A549 (cell line): ENCODE measurements at regions of chr11 and their contacts with region 1.

Region 1: DNA sequence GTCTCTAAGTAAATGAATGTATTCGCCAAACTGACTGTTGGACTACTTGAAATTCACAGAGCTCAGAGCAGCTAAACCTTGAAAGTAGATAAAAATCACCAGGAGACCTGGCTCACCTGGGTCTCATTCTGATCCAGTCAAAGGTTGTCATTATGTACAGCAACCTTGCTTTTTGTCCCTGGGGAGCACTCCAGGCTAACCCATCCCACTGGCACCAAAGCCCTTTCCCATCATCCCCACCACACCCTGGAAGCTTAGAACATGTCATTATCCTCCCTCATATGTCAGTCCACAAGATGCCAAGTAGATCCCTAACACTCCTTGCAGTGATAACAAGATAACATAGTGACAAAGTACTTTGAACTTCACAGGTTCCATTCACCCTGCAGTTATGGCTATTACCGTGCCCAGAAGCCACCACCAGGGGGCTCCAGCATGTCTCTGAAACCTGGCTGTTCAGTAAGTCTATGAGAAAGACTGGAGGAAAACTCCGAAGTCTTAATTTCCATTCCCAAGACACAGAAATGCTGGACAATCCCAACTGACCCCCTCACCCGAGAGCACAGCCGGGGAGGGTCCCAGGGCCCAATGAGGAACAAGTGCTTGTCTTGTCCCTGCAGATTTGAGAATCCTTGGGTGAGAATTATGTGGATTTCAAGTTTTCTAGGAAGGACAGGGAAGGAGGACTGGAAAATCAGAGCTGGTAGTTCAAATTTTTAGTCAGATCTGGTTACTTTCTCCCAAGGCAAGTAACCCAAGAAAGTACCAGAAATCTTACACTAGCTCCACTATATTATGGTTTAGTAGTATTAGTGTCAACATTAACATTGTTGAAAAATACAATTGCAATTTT is 43.0 kb upstream of the USP47 start:
- DNase-seq: peak; percentile 77 to 78
- ATAC-seq: peak; percentile 96 to 99
- H3K4me3 ChIP-seq: no peak overlapping the region
- H3K27ac ChIP-seq: peak overlapping the region; percentile 47 to 73; a peak in 4 of 6 replicates
- H3K4me1 ChIP-seq: peaks cover 4% of the 10 kb centered on the region; the same call in 2 of the 3 replicates
- CTCF ChIP-seq: peak; percentile 95
- EP300 ChIP-seq: no peak
- POLR2A ChIP-seq: no peak
- RAD21 ChIP-seq: peak; percentile 92

Region 2: GRCh38 chr11:11757909-11758308 is 40.9 kb before region 1 on chr11:
- CTCF ChIA-PET with region 1: no interaction called
- POLR2A ChIA-PET with region 1: no interaction called
- DNase-seq: no peak
- ATAC-seq: no peak
- H3K4me3 ChIP-seq: no peak overlapping the region
- H3K27ac ChIP-seq: no peak overlapping the region
- H3K4me1 ChIP-seq: no peaks in the 10 kb centered on the region
- CTCF ChIP-seq: no peak
- EP300 ChIP-seq: no peak
- POLR2A ChIP-seq: no peak
- RAD21 ChIP-seq: no peak

Region 3: DNA sequence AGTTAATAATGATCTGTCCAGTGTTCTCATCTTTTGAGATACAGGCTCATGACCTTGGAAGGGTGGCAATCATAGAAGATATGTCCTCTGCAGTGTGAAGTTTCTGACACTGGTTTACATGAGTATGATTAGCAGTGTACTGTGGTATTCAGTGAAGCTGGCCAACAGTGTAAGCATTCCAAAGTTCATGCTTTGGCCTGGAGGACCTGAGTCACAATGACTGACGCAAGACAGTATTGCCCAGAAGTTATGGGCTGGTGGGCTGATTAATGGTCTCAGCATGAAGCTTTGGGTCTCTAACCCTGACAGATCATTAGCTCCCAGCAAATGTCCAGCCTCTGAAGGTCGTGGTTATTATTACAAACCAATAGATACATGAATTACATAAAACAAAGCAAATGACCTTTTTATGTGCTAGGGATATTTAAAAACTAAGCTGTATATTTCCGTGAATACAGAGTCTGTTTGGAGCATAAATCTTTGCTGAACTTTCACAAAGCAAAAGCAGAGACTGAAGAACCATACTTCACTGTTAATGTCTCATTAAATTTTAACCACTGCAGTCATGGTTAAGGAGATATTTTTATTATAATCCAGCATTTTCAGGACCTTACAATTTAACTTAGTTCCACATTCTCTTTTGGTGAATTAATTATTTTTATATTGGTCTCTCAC is 14.6 kb after region 1 on chr11:
- CTCF ChIA-PET with region 1: interaction called, 31 read pairs
- POLR2A ChIA-PET with region 1: no interaction called
- DNase-seq: peak; percentile 45 to 87
- ATAC-seq: peak; percentile 99
- H3K4me3 ChIP-seq: no peak overlapping the region
- H3K27ac ChIP-seq: peak overlapping the region; percentile 78 to 89
- H3K4me1 ChIP-seq: peaks cover 35% of the 10 kb centered on the region
- CTCF ChIP-seq: no peak
- EP300 ChIP-seq: peak in 1 of 2 experiments; percentile 39; a peak in 1 of 5 replicates
- POLR2A ChIP-seq: no peak
- RAD21 ChIP-seq: no peak

Region 4: GRCh38 chr11:11826260-11826659 is 27.4 kb after region 1 on chr11:
- CTCF ChIA-PET with region 1: interaction called, 12 read pairs
- POLR2A ChIA-PET with region 1: no interaction called
- DNase-seq: no peak
- ATAC-seq: no peak
- H3K4me3 ChIP-seq: no peak overlapping the region
- H3K27ac ChIP-seq: no peak overlapping the region
- H3K4me1 ChIP-seq: peaks cover 8% of the 10 kb centered on the region; the same call in 2 of the 3 replicates
- CTCF ChIP-seq: no peak
- EP300 ChIP-seq: no peak
- POLR2A ChIP-seq: no peak
- RAD21 ChIP-seq: no peak

Region 5: DNA sequence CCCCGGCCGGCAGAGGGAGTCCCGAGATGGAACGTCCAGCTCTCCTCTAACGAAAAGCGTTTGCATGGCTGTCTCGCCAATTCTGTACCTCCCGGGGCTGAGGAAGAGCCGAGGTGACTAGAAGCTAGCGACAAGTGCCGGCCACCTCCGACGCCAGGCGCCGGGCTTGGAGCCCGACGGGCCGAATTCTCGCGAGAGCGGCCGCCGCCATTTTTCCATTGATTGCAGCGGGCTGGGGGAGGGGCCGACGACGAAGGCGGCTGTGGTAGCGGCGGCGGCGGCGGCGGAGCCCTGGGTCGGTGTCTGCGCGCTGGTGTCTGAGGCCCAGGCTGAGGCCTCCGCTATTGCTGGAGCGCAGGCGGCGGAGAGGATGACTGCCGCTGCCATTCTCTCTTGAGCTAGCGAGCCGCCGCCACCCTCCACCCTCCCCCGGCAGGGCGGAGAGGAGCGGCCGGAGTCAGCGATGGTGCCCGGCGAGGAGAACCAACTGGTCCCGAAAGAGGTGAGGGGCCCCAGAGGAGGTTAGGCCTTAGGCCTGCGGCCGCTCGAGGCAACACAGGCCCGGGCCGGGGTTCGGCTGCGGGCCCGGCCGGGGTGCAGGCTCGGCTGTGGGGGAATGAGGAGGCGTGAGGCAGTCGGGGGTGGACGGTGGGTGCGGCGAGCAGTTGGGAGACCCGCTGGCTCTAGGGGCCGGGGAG is 43.1 kb after region 1 on chr11 and contains the start of gene USP47:
- CTCF ChIA-PET with region 1: interaction called, 39 read pairs
- POLR2A ChIA-PET with region 1: no interaction called
- DNase-seq: peak; percentile 77 to 90
- ATAC-seq: peak; percentile 82 to 87
- H3K4me3 ChIP-seq: peak within 1 kb of the TSS; percentile 90
- H3K27ac ChIP-seq: peak within 1 kb of the TSS; percentile 91 to 96
- H3K4me1 ChIP-seq: peaks cover 29% of the 10 kb centered on the region
- CTCF ChIP-seq: peak; percentile 37; the same call in 2 of the 3 replicates
- EP300 ChIP-seq: no peak
- POLR2A ChIP-seq: peak; percentile 97
- RAD21 ChIP-seq: no peak
- polyA plus RNA-seq, gene USP47: 31.3 and 32.8 TPM in 2 replicates

Region 6: DNA sequence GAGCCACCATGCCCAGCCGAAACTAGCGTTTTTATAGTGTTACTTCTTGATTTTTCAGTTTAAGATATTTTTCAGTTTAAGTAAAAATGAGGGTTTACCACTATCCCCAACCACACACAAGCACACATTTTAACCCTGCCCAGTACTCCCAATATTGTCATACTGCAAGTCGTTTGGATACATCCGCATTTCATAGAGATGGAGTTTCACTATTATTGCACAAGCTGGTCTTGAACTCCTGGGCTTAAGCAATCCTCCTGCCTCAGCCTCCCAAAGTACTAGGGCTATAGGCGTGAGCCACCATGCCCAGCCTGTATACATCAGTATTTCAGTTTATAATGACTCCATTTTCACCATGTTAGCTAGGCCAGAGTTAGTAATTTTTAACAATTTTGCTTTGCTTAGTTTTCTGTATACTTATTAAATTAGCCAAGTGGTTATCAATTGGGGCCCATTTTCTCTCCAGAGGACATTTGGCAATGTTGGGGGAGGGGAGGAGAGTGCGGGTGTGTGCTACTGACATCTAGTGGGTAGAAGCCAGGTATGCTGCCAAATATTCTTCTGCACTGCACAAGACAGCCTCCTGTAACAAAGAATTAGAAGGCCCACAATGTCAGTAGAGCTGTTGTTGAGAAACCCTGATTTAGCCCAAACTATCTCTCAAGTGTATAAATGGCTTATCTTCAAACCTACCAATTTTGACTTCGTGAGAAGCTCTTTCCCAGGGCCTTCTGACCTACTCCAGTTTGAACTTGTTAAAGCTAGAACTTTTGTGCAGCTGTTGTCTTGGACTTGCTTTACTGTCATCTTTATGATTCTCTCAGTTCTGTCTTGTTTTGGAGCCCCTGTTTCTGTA is 50.3 kb after region 1 on chr11:
- CTCF ChIA-PET with region 1: interaction called, 39 read pairs
- POLR2A ChIA-PET with region 1: no interaction called
- DNase-seq: peak; percentile 46 to 72
- ATAC-seq: peak; percentile 94 to 96
- H3K4me3 ChIP-seq: no peak overlapping the region
- H3K27ac ChIP-seq: no peak overlapping the region
- H3K4me1 ChIP-seq: peaks cover 51% of the 10 kb centered on the region
- CTCF ChIP-seq: peak; percentile 83
- EP300 ChIP-seq: no peak
- POLR2A ChIP-seq: no peak
- RAD21 ChIP-seq: peak; percentile 53 to 64

Region 7: DNA sequence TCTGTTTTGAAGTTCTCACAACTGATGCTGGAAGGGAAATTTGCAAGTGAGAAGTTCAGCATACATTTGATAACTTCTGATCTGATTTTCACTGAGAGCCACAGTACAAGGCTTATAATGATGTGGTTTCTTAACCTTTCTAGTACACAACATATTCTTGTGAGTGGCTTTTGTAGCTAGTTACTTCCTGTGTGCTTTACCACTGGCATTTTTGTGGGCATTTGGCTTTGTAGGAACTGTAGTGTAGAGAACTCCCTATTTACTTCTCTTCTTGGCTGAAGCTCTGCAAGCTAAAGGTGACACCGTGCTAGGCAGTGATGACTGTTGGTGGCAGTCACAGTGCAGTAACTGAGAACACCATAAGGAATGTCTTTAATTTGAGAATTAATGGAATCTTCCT is 57.8 kb after region 1 on chr11:
- CTCF ChIA-PET with region 1: interaction called, 19 read pairs
- POLR2A ChIA-PET with region 1: no interaction called
- DNase-seq: no peak
- ATAC-seq: no peak
- H3K4me3 ChIP-seq: no peak overlapping the region
- H3K27ac ChIP-seq: 0 out of 6 replicates have a peak overlapping the region, but pooled peaks of 1 of the 2 experiments have one; percentile 10
- H3K4me1 ChIP-seq: peaks cover 38% of the 10 kb centered on the region
- CTCF ChIP-seq: no peak
- EP300 ChIP-seq: no peak
- POLR2A ChIP-seq: no peak
- RAD21 ChIP-seq: no peak

Region 8: DNA sequence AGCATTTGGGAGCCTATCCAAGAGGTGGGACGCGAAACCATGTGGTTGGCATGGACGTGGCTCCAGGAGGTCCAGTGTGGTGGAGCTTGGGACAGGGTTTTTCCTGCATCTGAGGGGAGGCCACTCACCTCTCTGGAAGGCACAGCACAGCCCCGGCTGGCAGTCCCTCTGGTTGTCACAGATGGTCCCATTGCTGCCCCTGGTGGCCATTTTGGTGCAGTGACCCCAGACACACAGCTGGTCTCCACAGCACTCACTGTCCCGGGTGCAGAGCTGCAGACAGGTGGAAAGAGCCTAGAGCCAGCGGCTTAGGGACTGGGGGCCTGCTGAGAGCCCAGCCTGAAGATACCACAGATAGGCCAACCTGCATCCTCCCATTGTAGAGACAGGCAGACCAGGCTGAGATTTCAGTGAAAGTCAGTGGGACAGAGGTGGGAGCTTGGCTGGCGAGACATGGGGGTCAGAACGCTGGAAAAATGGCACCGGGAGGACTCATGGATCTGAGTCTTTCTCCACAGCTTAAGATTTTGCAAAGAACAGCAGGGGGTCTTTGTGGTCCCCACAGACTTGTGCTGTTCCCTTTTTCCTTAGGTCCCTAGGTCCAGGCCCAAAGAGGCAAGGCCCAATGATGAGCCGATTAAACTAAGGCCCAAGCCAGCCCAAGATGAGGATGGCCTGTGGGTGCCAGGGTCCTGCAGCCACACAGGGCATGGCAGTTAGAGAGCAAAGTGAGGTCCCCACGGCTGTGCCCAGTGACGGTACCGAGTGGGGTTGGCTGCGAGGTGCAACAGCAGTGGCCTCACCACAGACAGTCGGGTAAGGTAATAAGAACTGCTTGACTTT is 168.2 kb after region 1 on chr11:
- CTCF ChIA-PET with region 1: interaction called, 11 read pairs
- POLR2A ChIA-PET with region 1: no interaction called
- DNase-seq: peak; percentile 64 to 90
- ATAC-seq: peak; percentile 88 to 96
- H3K4me3 ChIP-seq: no peak overlapping the region
- H3K27ac ChIP-seq: no peak overlapping the region
- H3K4me1 ChIP-seq: no peaks in the 10 kb centered on the region
- CTCF ChIP-seq: peak; percentile 56
- EP300 ChIP-seq: no peak
- POLR2A ChIP-seq: no peak
- RAD21 ChIP-seq: peak; percentile 48 to 64; a peak in 4 of 5 replicates